Heart right ventricle (tissue), 16 donors: ENCODE measurements at regions of chr13 and their contacts with region 1.

Region 1: GRCh38 chr13:109968876-109969577 is 182.6 kb upstream of the IRS2 start:
- DNase-seq: peak; percentile 58 to 60
- ATAC-seq: peak; percentile 89 to 98 (median 92)
- H3K4me3 ChIP-seq: no peak overlapping the region
- H3K27ac ChIP-seq: no peak overlapping the region
- H3K4me1 ChIP-seq: peaks cover 0 to 8% (median 0%) of the 10 kb centered on the region in 9 donors
- H3K27me3 ChIP-seq: no peaks in the 10 kb centered on the region
- CTCF ChIP-seq: no peak

Region 2: GRCh38 chr13:109715902-109716301 is 253.1 kb before region 1 on chr13:
- intact Hi-C with region 1: no loop called
- DNase-seq: no peak
- ATAC-seq: peak in 2 of 8 donors; percentile 47 to 90
- H3K4me3 ChIP-seq: no peak overlapping the region
- H3K27ac ChIP-seq: no peak overlapping the region
- H3K4me1 ChIP-seq: peaks cover 0 to 7% (median 0%) of the 10 kb centered on the region in 9 donors
- H3K27me3 ChIP-seq: peaks cover 0 to 17% (median 5%) of the 10 kb centered on the region in 7 donors
- CTCF ChIP-seq: no peak

Region 3: DNA sequence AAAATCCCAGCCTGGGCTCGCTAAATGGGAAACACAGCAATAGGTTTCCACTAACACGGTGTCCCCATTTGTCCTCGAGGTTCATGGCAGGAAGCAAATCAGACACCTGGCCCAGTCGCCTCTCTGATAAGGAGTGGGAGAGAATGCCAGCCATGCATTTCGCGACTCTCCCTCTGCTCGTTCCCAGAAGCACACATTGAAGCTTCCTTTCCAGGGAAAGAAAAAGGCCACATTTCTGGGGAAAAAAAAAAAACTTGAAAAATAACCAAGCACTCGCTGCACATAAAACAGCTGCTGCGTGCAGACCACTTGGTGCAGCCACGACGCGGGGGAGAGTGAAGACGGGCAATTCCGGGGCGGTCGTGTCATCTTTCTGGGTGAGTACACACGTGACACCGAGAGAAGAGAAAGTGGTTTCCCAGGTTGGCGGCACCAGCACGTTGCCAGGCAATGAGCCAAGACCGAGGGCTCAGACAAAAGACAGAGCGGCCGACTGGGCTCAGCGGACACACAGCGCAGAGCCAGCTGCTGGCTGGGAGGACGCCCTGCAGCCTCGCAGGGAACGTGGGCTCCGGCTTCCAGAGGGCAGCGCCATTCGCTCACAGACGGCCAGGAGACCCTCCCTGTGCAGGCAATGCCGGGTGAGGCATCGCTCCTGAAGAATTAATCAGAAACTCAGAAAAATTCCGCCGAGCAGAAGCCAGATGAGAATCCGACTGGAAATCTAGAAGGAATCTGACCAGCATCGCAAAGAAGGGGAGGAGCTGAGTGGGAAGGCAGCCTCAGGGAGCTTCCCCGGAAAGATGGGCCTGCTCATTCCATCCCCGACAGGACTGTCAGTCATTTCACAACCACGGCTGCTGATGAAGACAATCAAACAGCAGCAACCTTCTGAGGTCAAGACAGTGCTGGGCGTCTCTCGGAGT is 99.5 kb before region 1 on chr13:
- intact Hi-C with region 1: loop called in 1 of 10 experiments (anchors 10 kb)
- DNase-seq: peak; percentile 80 to 81
- ATAC-seq: peak; percentile 83 to 94 (median 88)
- H3K4me3 ChIP-seq: peak overlapping the region in 9 of 10 donors; percentile 15 to 52 (median 44)
- H3K27ac ChIP-seq: peak overlapping the region; percentile 42 to 87 (median 64)
- H3K4me1 ChIP-seq: peaks cover 0 to 38% (median 19%) of the 10 kb centered on the region in 9 donors
- H3K27me3 ChIP-seq: no peaks in the 10 kb centered on the region
- CTCF ChIP-seq: peak in 6 of 9 donors; percentile 16 to 50 (median 38)